CD8-positive, alpha-beta memory T cell (primary cell): ENCODE measurements at regions of chr2 and their contacts with region 1.

Region 1: DNA sequence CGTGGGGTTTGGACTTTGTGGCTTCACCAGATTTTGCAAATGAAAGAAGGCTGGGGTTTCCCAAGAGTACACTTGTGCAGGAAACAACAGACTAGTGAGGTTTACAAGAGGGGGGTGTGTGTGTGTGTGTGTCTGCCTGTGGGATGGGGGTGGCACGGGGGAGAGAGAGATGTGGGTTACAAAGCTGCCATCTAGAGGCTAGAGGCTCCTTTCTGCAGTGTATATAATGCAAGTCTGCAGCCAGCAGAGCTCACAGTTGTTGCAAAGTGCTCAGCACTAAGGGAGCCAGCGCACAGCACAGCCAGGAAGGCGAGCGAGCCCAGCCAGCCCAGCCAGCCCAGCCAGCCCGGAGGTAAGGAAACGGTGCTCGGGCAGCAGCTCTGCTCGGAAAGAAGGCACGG is at the start of gene ACKR3:
- DNase-seq: peak; percentile 61 to 86 (median 75)
- H3K4me3 ChIP-seq: peak within 1 kb of the TSS; percentile 57
- H3K4me3 Mint-ChIP-seq: peak within 1 kb of the TSS; percentile 10 to 84 (median 73)
- H3K27ac ChIP-seq: no peak within 1 kb of the TSS
- H3K27ac Mint-ChIP-seq: peak within 1 kb of the TSS; percentile 2 to 79 (median 68)
- H3K4me1 ChIP-seq: peaks cover 19% of the 10 kb centered on the region
- H3K4me1 Mint-ChIP-seq: peaks cover 19 to 41% (median 20%) of the 10 kb centered on the region in 3 donors
- H3K27me3 ChIP-seq: no peaks in the 10 kb centered on the region
- H3K27me3 Mint-ChIP-seq: peaks cover 0 to 3% of the 10 kb centered on the region in 2 donors
- total RNA-seq, gene ACKR3: 0.90 to 1.6 TPM

Region 2: DNA sequence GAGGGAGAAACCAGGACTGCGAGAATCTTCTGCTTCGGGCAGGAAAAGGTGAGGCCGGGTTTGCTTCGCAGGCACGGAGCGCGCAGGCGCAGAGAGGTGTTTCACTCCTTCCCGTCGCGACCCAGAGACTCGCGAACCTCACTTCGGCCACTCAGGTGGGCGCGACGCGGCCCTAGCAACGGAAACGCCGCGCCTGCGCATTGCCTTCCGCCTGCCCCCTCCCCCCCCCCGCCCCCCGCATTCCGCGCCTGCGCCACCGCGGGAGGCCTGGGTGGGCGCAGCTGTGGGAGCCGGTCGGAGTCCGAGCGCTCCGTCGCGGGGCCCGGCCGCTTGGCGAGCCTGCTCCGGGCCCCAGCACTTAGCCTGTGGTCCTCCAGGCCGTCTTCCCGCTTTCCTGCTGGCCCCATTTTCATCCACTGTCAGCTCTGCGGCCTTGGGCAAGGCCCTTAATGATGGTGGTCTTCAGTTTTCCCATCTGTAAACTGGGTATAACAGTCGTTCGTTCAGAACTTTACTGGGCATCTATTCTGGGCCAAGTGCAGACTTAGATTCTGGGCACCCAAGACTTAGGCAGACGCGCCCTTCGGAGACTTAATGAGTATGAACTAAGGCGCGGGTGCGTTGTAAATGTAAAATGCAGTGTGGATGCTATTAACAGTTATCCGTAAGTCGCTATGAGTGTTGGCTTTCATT is 62.0 kb before region 1 on chr2:
- CTCF ChIA-PET with region 1: interaction called, 165 read pairs
- POLR2A ChIA-PET with region 1: interaction called, 3 read pairs
- DNase-seq: peak; percentile 26 to 67 (median 56)
- H3K4me3 ChIP-seq: peak overlapping the region; percentile 39
- H3K4me3 Mint-ChIP-seq: peak overlapping the region; percentile 40 to 87 (median 74)
- H3K27ac ChIP-seq: no peak overlapping the region
- H3K27ac Mint-ChIP-seq: peak overlapping the region in 2 of 8 donors; percentile 33 to 42
- H3K4me1 ChIP-seq: peaks cover 4% of the 10 kb centered on the region
- H3K4me1 Mint-ChIP-seq: peaks cover 7 to 11% (median 8%) of the 10 kb centered on the region in 3 donors
- H3K27me3 ChIP-seq: no peaks in the 10 kb centered on the region
- H3K27me3 Mint-ChIP-seq: peaks cover 21 to 54% of the 10 kb centered on the region in 2 donors

Region 3: GRCh38 chr2:236512902-236513435 is 56.6 kb before region 1 on chr2:
- CTCF ChIA-PET with region 1: interaction called, 165 read pairs
- POLR2A ChIA-PET with region 1: interaction called, 7 read pairs
- DNase-seq: peak; percentile 47 to 81 (median 62)
- H3K4me3 ChIP-seq: no peak overlapping the region
- H3K4me3 Mint-ChIP-seq: no peak overlapping the region
- H3K27ac ChIP-seq: no peak overlapping the region
- H3K27ac Mint-ChIP-seq: no peak overlapping the region
- H3K4me1 ChIP-seq: peaks cover 8% of the 10 kb centered on the region
- H3K4me1 Mint-ChIP-seq: no peaks in the 10 kb centered on the region
- H3K27me3 ChIP-seq: no peaks in the 10 kb centered on the region
- H3K27me3 Mint-ChIP-seq: peaks cover 6 to 14% of the 10 kb centered on the region in 2 donors

Region 4: GRCh38 chr2:236536727-236537398 is 32.7 kb before region 1 on chr2:
- CTCF ChIA-PET with region 1: interaction called, 26 read pairs
- POLR2A ChIA-PET with region 1: interaction called, 3 read pairs
- DNase-seq: peak; percentile 36 to 74 (median 55)
- H3K4me3 ChIP-seq: peak overlapping the region; percentile 81
- H3K4me3 Mint-ChIP-seq: peak overlapping the region; percentile 94 to 100 (median 97)
- H3K27ac ChIP-seq: peak overlapping the region; percentile 43
- H3K27ac Mint-ChIP-seq: peak overlapping the region; percentile 87 to 100 (median 97)
- H3K4me1 ChIP-seq: peaks cover 27% of the 10 kb centered on the region
- H3K4me1 Mint-ChIP-seq: peaks cover 52 to 70% (median 65%) of the 10 kb centered on the region in 3 donors
- H3K27me3 ChIP-seq: no peaks in the 10 kb centered on the region
- H3K27me3 Mint-ChIP-seq: no peaks in the 10 kb centered on the region

Region 5: GRCh38 chr2:236545814-236546480 is 23.6 kb before region 1 on chr2:
- CTCF ChIA-PET with region 1: interaction called, 36 read pairs
- POLR2A ChIA-PET with region 1: interaction called, 4 read pairs
- DNase-seq: peak in 2 of 5 donors; percentile 16 to 42
- H3K4me3 ChIP-seq: peak overlapping the region; percentile 57
- H3K4me3 Mint-ChIP-seq: peak overlapping the region; percentile 49 to 86 (median 71)
- H3K27ac ChIP-seq: peak overlapping the region; percentile 46
- H3K27ac Mint-ChIP-seq: peak overlapping the region; percentile 87 to 94 (median 90)
- H3K4me1 ChIP-seq: peaks cover 72% of the 10 kb centered on the region
- H3K4me1 Mint-ChIP-seq: peaks cover 87 to 95% (median 95%) of the 10 kb centered on the region in 3 donors
- H3K27me3 ChIP-seq: no peaks in the 10 kb centered on the region
- H3K27me3 Mint-ChIP-seq: no peaks in the 10 kb centered on the region

Region 6: DNA sequence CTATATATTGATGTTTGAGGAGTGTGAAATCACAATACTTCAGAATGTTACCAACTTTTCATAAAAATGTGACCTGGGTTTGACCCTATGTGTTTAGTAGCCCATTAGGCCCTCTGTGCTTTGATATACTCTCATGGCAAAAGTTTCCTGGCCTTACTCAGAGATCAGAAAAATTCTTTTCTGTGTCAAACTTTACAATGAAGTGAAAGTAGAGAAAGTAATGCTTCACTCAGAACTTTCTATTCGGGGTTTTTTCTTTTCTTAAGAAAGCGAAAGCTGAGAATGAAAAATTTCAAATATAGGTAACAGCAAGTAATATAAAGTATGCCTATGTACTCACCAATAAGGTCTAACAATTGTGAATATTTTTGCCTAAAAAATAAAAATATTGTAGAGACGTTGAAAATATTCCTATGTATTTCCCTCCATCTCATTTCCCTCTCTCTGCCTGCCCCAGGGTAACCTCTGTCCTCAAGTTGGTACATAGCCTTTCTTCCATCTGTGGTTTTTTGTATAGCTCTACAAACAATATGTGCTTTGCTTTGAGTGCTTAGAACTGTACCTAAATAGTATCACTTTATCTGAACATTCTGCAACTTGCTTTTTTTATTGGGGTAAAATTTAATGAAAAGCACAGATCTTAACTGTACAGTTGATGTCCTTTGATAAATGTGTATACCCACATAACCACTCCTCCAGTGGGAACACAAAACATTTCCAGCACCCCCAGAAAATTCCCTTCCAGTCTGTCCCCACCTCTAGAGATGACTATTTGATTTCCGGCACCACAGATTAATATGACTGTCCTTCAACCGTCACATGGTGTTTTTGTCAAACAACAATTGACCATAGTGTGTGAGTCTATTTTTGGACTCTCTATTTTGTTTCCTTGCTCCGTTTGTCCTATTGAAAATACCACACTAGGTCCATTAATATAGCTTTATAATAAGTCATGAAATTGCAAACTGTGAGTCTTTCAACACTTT is 10.3 kb before region 1 on chr2:
- CTCF ChIA-PET with region 1: interaction called, 27 read pairs
- POLR2A ChIA-PET with region 1: no interaction called
- DNase-seq: no peak
- H3K4me3 ChIP-seq: no peak overlapping the region
- H3K4me3 Mint-ChIP-seq: peak overlapping the region in 2 of 7 donors; percentile 0 to 32
- H3K27ac ChIP-seq: no peak overlapping the region
- H3K27ac Mint-ChIP-seq: peak overlapping the region in 6 of 8 donors; percentile 1 to 61 (median 16)
- H3K4me1 ChIP-seq: peaks cover 29% of the 10 kb centered on the region
- H3K4me1 Mint-ChIP-seq: peaks cover 42 to 61% (median 50%) of the 10 kb centered on the region in 3 donors
- H3K27me3 ChIP-seq: no peaks in the 10 kb centered on the region
- H3K27me3 Mint-ChIP-seq: no peaks in the 10 kb centered on the region